Gastrocnemius medialis (tissue), 4 donors: ENCODE measurements at regions of chr22 and their contacts with region 1.

Region 1: DNA sequence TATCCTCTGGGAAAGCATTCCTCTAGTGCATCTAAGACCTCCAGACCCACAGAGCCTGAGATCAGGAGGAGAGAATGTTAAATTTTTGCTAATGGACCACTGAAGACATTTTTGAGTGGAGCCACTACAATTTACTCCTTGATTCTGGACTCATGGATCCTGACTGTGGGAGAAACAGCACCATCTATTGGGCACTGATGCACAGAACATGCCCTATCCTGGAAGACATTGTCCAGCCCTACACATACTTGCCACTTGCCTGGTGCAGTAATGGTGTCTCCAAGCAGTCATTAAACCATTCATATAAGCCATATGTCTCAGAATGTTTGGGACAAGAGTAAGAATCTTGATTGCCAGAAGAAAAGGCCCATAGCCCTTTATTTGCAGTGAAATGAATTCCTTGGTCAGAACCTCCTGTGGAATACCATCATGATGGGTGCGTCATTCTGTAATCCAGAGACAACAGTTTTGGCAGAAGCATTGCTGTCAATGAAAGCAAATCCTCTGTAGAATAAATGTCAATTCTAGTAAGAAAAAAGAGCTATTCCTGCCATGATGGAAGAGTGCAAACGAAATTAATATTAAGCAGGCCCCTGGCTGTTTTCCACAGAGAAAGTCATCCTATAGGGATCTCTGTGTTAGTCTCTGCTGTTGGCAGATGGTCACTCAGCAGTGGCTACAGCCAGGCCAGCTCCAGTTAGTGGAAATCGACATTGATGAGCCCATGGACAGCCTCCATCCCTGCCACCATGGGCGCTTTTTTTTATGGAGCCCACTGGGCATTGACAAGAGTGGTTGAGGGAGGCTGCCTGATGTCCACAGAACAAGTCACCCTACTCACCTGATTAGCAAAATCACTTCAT is 43.5 kb downstream of the GGTLC2 start:
- DNase-seq: no peak
- ATAC-seq: peak in 1 of 2 donors; percentile 56
- H3K4me3 ChIP-seq: no peak overlapping the region
- H3K27ac ChIP-seq: no peak overlapping the region
- H3K4me1 ChIP-seq: no peaks in the 10 kb centered on the region
- H3K27me3 ChIP-seq: no peaks in the 10 kb centered on the region
- CTCF ChIP-seq: peak in 3 of 5 experiments; percentile 26 to 66 (median 55)
- POLR2A ChIP-seq: no peak

Region 2: GRCh38 chr22:22546490-22546889 is 141.4 kb before region 1 on chr22:
- in situ Hi-C with region 1: no loop called
- intact Hi-C with region 1: no loop called
- DNase-seq: no peak
- ATAC-seq: no peak
- H3K4me3 ChIP-seq: no peak overlapping the region
- H3K27ac ChIP-seq: no peak overlapping the region
- H3K4me1 ChIP-seq: no peaks in the 10 kb centered on the region
- H3K27me3 ChIP-seq: no peaks in the 10 kb centered on the region
- CTCF ChIP-seq: no peak
- POLR2A ChIP-seq: no peak

Region 3: DNA sequence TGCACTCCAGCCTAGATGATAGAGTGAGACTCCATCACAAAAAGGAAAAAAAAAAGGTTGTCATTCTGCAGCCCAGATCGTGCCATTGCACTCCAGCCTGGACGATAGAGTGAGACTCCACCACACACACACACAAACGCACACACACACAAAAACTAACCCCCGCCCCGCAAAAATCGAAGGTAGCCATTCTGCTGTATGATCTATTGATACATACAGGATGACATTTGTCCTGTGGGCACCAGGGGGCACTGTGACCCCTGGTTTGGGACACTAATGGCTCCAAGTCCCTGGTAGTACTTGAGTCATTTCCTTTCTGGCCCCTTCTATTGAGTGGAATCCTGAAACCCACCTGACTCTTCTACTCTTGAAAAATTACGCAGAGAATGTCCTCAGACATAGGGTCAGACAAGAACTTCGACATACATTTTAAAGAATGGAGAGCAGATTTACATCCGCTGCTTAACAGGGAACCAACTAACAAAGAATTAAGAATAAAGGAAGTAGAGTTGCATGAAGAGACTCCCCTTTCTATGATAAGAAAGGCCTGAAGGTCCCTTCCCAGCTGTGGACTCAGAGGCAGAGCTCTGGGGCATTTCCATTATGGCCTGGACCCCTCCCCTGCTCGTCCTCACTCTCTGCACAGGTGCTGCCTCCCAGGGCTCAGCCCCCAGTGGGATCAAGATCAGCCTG is 93.8 kb before region 1 on chr22:
- in situ Hi-C with region 1: no loop called
- intact Hi-C with region 1: loop called (anchors 5 kb)
- DNase-seq: no peak
- ATAC-seq: no peak
- H3K4me3 ChIP-seq: no peak overlapping the region
- H3K27ac ChIP-seq: no peak overlapping the region
- H3K4me1 ChIP-seq: no peaks in the 10 kb centered on the region
- H3K27me3 ChIP-seq: peaks cover 0 to 2% (median 0%) of the 10 kb centered on the region in 3 donors
- CTCF ChIP-seq: peak in 2 of 5 experiments; percentile 13 to 16
- POLR2A ChIP-seq: no peak

Region 4: DNA sequence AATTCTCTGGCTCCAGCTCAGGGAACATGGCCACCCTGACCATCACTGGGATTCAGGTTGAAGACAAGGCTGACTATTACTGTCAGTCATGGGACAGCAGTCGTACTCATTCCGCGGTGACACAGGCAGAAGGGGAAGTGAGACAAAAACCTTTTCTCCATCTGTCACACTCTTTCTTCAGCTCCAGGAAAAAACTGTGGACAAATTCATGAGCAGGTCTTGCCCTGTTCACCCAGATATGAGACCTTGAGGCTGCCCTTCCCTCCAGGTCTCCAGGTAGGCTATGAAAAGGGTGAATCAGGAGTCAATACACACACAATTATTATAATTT is 82.8 kb before region 1 on chr22:
- in situ Hi-C with region 1: no loop called
- intact Hi-C with region 1: no loop called
- DNase-seq: no peak
- ATAC-seq: no peak
- H3K4me3 ChIP-seq: no peak overlapping the region
- H3K27ac ChIP-seq: no peak overlapping the region
- H3K4me1 ChIP-seq: no peaks in the 10 kb centered on the region
- H3K27me3 ChIP-seq: no peaks in the 10 kb centered on the region
- CTCF ChIP-seq: no peak
- POLR2A ChIP-seq: no peak